Left colon (tissue), 2 donors: ENCODE measurements at regions of chr6 and their contacts with region 1.

Region 1: DNA sequence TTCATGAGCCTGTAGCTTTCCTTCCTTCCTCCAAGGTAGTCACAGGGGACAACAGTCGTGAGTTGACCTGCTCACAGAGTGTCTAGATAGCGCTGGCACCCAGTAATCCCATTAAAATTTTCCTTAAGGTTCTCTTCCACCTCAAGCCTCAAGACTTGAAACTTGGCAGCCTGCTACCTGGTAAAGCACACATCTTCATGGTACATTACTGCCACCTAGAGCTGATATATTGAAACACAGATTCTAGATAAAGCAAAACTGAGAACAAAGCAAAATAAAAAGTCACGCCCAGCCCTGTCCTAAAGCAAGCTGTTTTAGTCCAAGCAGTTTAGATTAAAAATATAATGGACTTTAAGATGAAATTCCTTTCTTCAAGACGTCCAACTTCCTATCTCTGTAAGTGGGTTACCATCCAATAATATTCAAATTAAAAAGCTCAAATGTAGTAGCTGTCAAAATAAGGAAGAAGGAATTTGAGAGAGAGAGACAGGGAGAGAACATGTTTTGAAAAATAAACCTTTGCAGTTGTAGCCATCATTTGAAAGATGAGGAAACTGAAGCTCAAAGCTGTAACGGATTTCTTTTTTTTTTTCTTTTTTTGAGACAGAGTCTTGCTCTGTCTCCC is 50.7 kb upstream of the CD83 start:
- DNase-seq: no peak
- ATAC-seq: peak; percentile 70

Region 2: DNA sequence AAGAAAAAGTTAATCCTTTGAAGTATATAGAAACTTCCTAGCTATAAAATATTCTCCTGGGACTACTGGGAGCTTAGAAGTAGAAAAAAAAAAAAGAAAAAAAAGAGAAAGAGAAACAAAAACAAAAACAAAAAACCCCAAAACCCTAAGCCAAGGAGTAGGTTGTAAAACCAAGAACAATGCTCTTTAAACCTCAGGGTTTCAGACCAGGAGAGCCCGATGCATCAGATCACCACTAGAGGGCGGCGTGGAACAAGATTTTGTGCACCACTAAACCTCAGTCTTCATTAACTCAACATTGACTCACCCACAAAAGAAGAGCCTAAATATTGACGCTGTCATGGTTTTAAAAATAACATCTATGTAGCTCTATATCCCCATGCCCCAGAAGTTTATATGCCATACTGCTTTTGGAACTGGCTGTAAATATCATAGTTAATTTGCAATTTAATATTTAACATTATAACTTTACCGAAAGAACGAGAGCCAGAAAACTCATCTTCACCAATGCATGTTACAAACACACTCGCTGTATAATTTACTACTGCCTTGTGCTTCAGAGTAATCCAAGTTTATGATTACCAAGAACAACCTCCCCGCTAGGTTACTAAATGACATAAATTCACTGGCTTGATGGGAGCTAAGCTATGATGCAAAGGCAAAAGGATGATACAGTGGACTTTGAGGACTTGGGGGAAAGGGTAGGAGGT is 271.7 kb before region 1 on chr6:
- intact Hi-C with region 1: loop called in 1 of 2 experiments (anchors 10 kb)
- DNase-seq: peak; percentile 77 to 90
- ATAC-seq: peak; percentile 89

Region 3: DNA sequence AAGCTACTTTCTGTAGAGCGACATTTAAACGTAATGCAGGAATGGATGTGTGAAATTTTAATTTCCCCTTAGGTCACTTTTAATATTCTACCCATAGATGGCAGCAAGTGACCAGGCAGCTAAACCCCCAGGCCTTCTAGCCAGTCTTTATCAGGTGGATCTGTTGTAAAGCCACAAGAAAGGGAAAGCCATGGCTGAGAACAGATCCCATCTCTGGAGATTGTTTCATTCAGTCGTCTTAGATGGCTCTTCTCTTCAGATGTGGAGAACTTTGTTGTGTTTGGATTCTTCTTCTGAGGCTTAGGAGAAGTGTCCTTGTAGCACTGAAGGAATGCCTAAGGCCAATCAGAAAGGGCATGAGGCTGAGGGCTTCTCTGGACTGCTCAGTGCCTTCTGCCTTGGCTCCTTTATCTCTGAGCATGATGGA is 157.9 kb before region 1 on chr6:
- intact Hi-C with region 1: loop called in 1 of 2 experiments (anchors 5 kb)
- DNase-seq: peak; percentile 15 to 29
- ATAC-seq: peak; percentile 81